HCT116 (cell line): ENCODE measurements at regions of chr11 and their contacts with region 1.

Region 1: DNA sequence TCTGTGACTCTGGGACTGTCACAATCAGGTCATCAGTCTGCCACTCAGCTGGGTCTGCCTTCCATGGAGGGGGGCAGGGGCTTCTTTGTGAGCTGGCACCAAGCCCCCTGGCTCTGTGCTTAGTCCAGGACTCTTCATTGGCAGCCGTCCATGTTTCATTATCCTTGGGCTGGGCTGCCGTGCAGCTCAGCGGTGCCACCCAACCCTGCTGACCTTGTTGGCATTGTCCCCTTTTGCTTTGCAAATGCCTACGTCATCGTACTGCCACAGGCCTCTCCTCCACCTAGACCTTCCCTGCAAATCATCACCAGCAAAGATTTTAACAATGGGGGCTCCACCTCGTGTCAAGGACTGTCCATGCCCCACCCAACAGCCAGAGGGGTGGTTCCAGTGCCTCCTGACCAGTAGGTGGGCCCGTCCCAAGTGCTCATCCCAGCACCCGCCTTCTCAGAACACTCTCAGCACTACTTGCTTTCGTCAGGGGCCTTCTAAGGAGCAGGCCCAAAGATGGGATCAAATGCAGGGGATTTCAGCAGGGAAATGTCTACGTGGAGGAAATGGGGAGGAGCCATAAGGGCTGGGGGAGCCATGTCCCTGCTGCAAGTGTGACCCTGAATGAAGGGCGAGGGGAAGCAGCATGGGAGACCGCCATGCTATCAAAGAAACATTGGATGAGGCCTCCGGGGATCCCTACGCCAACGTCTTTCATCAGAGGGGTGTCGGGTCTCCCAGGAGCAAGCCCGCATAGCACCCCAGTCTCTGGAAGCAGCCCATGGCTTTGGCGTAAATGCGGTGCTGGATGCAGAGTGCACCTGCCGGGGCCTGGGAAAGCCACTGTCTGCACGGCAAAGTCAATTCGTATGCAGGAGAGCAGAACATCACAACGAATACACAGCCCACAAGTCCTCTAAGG is 18.2 kb downstream of the KRTAP5-6 start:
- DNase-seq: no peak
- ATAC-seq: no peak
- H3K4me3 ChIP-seq: no peak overlapping the region
- H3K27ac ChIP-seq: no peak overlapping the region
- H3K4me1 ChIP-seq: no peaks in the 10 kb centered on the region
- H3K27me3 ChIP-seq: no peaks in the 10 kb centered on the region
- CTCF ChIP-seq: no peak
- POLR2A ChIP-seq: no peak
- RAD21 ChIP-seq: no peak

Region 2: DNA sequence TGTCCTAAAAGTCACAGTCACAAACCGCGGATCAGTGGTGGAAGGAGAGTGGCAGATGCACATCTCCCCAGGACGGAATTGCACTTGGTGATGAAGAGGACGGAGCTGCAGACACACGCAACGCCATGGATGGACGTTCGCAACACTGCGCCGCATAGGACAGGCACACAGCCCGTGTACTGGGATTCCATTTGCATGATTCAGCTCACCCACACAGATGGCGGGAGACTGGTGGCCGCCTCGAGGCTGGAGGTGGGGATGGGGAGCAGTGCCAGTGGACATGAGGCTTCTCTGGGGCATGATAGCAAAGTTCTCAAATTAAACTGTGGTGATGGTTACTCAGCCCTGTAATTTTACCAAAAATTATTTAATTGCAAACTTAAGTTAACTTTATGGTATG is 180.5 kb before region 1 on chr11:
- CTCF ChIA-PET with region 1: no interaction called
- POLR2A ChIA-PET with region 1: no interaction called
- RAD21 ChIA-PET with region 1: no interaction called
- intact Hi-C with region 1: no loop called
- DNase-seq: no peak
- ATAC-seq: no peak
- H3K4me3 ChIP-seq: no peak overlapping the region
- H3K27ac ChIP-seq: no peak overlapping the region
- H3K4me1 ChIP-seq: peaks cover 4 to 15% of the 10 kb centered on the region in 2 experiments; a peak in 2 of 4 replicates
- H3K27me3 ChIP-seq: no peaks in the 10 kb centered on the region
- CTCF ChIP-seq: no peak
- POLR2A ChIP-seq: no peak
- RAD21 ChIP-seq: no peak

Region 3: GRCh38 chr11:1810761-1811160 is 95.5 kb after region 1 on chr11:
- CTCF ChIA-PET with region 1: no interaction called
- POLR2A ChIA-PET with region 1: no interaction called
- RAD21 ChIA-PET with region 1: no interaction called
- intact Hi-C with region 1: loop called (anchors 5 kb)
- DNase-seq: no peak
- ATAC-seq: no peak
- H3K4me3 ChIP-seq: no peak overlapping the region
- H3K27ac ChIP-seq: no peak overlapping the region
- H3K4me1 ChIP-seq: no peaks in the 10 kb centered on the region
- H3K27me3 ChIP-seq: no peaks in the 10 kb centered on the region
- CTCF ChIP-seq: no peak
- POLR2A ChIP-seq: no peak
- RAD21 ChIP-seq: no peak